ENCODE measurements at regions of chr1 and their contacts with region 1.

Region 1: GRCh38 chr1:43934101-43934985 is 742 bp downstream of the ARTN start:
- DNase-seq: peak; percentile 72
- ATAC-seq: peak; percentile 62
- H3K4me3 Mint-ChIP-seq: no peak overlapping the region
- H3K27ac Mint-ChIP-seq: peak overlapping the region; percentile 20
- H3K4me1 Mint-ChIP-seq: peaks cover 4% of the 10 kb centered on the region
- H3K27me3 Mint-ChIP-seq: peaks cover 24% of the 10 kb centered on the region

Region 2: GRCh38 chr1:43529206-43529731 is 405.1 kb before region 1 on chr1:
- CTCF ChIA-PET with region 1: interaction called, 29 read pairs
- DNase-seq: peak; percentile 82
- ATAC-seq: peak; percentile 67
- H3K4me3 Mint-ChIP-seq: no peak overlapping the region
- H3K27ac Mint-ChIP-seq: no peak overlapping the region
- H3K4me1 Mint-ChIP-seq: peaks cover 13% of the 10 kb centered on the region
- H3K27me3 Mint-ChIP-seq: peaks cover 49% of the 10 kb centered on the region

Region 3: DNA sequence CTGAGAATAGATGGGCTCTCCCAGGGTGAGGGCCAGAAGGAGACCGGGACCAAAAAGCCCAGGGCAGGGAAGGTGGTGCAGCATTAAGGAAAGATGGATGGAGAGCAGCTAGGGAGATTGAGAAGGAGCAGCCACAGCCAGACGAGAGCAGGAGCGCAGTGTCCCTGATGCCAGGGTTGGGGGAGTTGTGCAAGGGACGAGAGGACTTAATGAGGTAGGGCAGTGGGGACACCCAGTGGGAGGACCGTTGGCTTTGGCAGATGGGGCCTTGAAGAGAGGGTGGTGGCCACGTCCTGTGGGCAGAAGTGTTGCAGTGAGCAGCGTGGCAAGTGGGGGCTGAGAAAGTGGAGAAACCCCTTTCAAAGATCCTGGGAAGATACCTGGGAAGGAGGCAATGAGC is 322.4 kb before region 1 on chr1:
- CTCF ChIA-PET with region 1: no interaction called
- DNase-seq: no peak
- ATAC-seq: no peak
- H3K4me3 Mint-ChIP-seq: no peak overlapping the region
- H3K27ac Mint-ChIP-seq: no peak overlapping the region
- H3K4me1 Mint-ChIP-seq: no peaks in the 10 kb centered on the region
- H3K27me3 Mint-ChIP-seq: no peaks in the 10 kb centered on the region

Region 4: DNA sequence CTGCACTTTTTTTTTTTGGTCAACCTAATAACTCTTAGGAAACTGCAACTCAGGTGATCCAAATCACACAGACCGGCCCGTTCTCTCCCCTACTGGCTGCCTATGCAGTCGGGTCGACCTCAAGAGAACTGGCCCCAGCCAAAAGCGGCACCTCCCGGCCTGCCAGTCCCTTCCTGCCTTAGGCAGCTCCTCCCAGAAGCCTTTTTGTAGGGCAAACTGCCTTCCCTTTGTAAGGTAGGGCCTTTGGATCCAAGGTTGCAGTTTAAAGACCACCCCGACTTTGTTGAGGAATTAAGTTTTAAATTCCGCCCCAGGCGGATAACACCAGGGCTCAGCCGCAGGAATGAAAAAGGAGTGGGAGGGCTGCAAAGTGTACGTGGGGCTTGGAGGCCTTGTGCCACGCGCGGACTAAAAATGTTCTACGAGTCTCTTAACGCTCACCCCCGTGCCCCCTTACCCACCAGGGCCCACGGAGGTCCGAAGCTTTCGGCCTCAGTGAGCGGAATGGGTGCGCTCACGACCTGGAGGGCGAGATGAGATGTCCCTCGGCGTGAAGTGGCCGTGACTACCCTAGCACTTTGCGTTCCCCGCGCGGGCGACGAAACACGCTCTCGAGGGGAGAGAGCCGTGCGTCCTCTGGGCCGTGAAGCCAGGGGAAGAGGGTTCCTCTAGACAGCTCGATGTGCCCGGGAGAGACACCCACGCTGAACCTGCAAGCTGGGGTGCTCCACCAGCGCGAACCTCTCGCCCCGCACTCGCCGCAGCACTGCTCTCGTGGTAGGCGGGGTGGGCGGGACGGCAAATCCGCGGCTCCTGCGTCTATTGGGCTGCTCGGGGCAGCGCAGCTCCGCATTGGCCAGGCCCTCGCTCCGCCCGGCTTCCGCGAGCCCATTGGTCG is 227.5 kb before region 1 on chr1:
- CTCF ChIA-PET with region 1: interaction called, 11 read pairs
- DNase-seq: peak; percentile 95
- ATAC-seq: peak; percentile 97
- H3K4me3 Mint-ChIP-seq: peak overlapping the region; percentile 92
- H3K27ac Mint-ChIP-seq: peak overlapping the region; percentile 74
- H3K4me1 Mint-ChIP-seq: peaks cover 44% of the 10 kb centered on the region
- H3K27me3 Mint-ChIP-seq: no peaks in the 10 kb centered on the region

Region 5: DNA sequence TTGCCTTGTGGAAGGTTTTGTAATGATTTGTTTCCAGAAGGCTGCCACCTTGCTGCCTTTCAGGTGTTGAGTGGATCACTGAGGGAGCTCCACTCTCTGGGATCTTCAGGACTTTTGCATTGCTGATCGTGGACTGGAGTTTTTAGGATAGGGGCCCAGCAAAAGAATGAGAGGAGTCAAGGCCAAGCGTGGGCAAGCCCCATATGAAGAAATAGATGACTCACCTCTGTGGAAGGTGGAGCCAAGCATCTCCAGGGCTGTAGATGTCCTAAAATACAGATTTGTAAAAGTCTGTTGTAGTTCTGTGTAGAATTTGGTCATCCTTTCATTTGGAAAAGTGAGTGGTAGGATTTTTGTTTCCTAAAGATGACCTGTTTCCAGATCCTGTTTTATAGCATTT is 160.0 kb before region 1 on chr1:
- CTCF ChIA-PET with region 1: interaction called, 19 read pairs
- DNase-seq: no peak
- ATAC-seq: no peak
- H3K4me3 Mint-ChIP-seq: no peak overlapping the region
- H3K27ac Mint-ChIP-seq: no peak overlapping the region
- H3K4me1 Mint-ChIP-seq: peaks cover 7% of the 10 kb centered on the region
- H3K27me3 Mint-ChIP-seq: no peaks in the 10 kb centered on the region

Region 6: DNA sequence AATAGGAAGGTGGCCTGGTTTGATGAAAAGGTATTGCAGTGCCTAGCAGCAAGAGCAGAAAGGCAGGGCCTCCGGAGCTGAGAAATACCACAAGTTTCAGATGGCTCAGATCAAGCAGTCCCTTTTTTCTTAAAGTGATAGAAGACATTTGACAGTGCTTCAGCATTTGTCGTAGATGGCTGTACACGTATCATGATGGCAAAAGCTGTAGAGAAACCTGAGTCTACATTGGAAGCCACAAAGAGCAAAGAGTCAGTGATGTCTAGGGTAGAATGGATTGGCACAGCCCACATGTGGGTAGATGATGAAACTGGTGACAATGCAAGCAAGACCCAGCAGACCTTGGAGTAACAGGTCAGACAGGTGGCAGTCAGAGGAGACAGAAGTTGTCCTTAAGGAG is 102.1 kb before region 1 on chr1:
- CTCF ChIA-PET with region 1: no interaction called
- DNase-seq: peak; percentile 46
- ATAC-seq: peak; percentile 74
- H3K4me3 Mint-ChIP-seq: no peak overlapping the region
- H3K27ac Mint-ChIP-seq: peak overlapping the region; percentile 3
- H3K4me1 Mint-ChIP-seq: peaks cover 51% of the 10 kb centered on the region
- H3K27me3 Mint-ChIP-seq: no peaks in the 10 kb centered on the region

Region 7: DNA sequence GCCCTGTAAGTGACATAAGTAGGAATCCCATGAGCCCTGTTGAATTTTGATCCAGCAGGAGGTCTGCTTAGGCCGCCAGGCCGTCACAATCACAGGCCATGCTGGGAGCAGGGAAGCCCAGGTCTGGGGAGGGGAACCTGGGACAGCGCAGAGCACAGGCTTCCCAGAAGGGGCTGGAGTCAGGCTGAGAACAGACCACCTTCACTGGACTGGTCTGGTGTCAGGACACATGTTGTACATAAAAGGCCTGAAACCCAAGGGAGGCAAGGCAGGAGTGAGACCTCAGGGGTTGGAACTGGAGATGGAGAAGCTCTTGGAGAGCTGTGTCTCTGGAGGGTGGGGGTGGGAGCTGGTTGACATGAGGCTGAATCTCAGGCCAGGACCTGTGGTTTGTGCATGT is 64.0 kb before region 1 on chr1:
- CTCF ChIA-PET with region 1: no interaction called
- DNase-seq: no peak
- ATAC-seq: no peak
- H3K4me3 Mint-ChIP-seq: no peak overlapping the region
- H3K27ac Mint-ChIP-seq: no peak overlapping the region
- H3K4me1 Mint-ChIP-seq: peaks cover 13% of the 10 kb centered on the region
- H3K27me3 Mint-ChIP-seq: no peaks in the 10 kb centered on the region

Region 8: GRCh38 chr1:43946236-43947060 is 12.1 kb after region 1 on chr1 and contains the start of gene IPO13:
- CTCF ChIA-PET with region 1: interaction called, 123 read pairs
- DNase-seq: peak; percentile 97
- ATAC-seq: peak; percentile 97
- H3K4me3 Mint-ChIP-seq: peak within 1 kb of the TSS; percentile 92
- H3K27ac Mint-ChIP-seq: peak within 1 kb of the TSS; percentile 91
- H3K4me1 Mint-ChIP-seq: peaks cover 35% of the 10 kb centered on the region
- H3K27me3 Mint-ChIP-seq: no peaks in the 10 kb centered on the region
- total RNA-seq, gene IPO13: 25.3 to 29.4 TPM

Region 9: DNA sequence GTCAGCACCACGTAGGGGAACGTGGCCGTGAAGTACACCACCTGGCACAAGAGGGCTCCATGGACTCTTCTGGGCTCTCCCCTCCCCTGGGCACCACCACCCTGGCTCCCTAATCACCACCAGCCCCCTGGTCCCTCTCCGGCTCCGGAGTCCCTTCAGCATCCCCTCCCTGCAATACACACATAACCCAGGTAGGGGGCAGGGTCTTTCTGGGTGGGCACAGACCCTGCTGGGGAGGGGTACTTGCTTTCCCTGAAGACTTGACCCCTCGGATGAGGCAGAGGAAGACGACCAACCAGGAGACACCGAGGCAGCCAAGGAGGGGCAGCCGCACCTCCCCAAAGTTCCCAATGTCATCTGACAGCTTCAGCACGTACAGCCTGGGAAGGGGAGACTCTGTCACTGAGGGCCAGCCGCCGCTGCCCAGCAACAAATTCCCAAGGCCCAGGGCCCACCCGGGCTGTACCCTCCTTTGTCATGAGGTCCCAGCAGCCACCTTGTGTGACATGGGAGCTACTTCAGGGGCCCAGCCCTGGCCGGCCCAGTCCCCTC is 68.3 kb after region 1 on chr1:
- CTCF ChIA-PET with region 1: interaction called, 10 read pairs
- DNase-seq: no peak
- ATAC-seq: no peak
- H3K4me3 Mint-ChIP-seq: no peak overlapping the region
- H3K27ac Mint-ChIP-seq: no peak overlapping the region
- H3K4me1 Mint-ChIP-seq: peaks cover 7% of the 10 kb centered on the region
- H3K27me3 Mint-ChIP-seq: no peaks in the 10 kb centered on the region

Region 10: GRCh38 chr1:44049839-44050238 is 115.5 kb after region 1 on chr1:
- CTCF ChIA-PET with region 1: interaction called, 28 read pairs
- DNase-seq: no peak
- ATAC-seq: no peak
- H3K4me3 Mint-ChIP-seq: no peak overlapping the region
- H3K27ac Mint-ChIP-seq: no peak overlapping the region
- H3K4me1 Mint-ChIP-seq: peaks cover 13% of the 10 kb centered on the region
- H3K27me3 Mint-ChIP-seq: peaks cover 15% of the 10 kb centered on the region

Measured in activated CD8-positive, alpha-beta memory T cell treated with anti-CD3 and anti-CD28 coated beads, Interleukin-2, amount 10 ng/mL, durations not matched to agents 7 days and 5 days (primary cell).